Gastrocnemius medialis (tissue), 4 donors: ENCODE measurements at regions of chr11 and their contacts with region 1.

Region 1: GRCh38 chr11:63813035-63813562 is at the start of gene SPINDOC:
- DNase-seq: peak; percentile 56 to 66
- ATAC-seq: peak; percentile 86 to 92
- H3K4me3 ChIP-seq: peak within 1 kb of the TSS; percentile 82 to 99 (median 90)
- H3K27ac ChIP-seq: peak within 1 kb of the TSS; percentile 70 to 75 (median 73)
- H3K4me1 ChIP-seq: peaks cover 9 to 16% of the 10 kb centered on the region in 2 donors
- H3K27me3 ChIP-seq: no peaks in the 10 kb centered on the region
- CTCF ChIP-seq: no peak
- POLR2A ChIP-seq: peak; percentile 56 to 80
- total RNA-seq, gene SPINDOC: 2.7 to 6.3 (median 3.5) TPM

Region 2: DNA sequence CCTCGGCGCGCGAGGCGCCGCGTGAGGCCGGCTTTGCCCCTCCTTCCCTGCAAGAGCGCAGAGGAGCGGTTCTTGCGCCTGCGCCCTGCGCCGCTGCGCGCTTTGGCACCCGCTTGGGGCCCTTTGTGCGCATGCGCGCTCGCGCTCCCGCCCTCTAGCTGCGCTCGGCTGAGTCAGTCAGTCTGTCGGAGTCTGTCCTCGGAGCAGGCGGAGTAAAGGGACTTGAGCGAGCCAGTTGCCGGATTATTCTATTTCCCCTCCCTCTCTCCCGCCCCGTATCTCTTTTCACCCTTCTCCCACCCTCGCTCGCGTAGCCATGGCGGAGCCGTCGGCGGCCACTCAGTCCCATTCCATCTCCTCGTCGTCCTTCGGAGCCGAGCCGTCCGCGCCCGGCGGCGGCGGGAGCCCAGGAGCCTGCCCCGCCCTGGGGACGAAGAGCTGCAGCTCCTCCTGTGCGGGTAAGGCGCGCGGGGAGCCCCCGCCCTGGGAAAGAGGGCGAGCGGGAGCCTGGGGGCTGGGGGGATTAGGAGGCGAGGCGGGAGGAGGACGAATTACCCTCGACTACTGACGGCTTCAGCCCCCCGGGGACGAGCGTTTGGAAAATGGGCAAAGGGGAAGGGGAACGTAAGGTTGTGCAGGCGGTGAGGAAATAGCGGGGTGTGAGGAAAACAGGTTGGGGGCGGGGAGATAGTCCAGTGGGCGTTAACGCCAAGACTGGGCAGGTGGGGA is 131.6 kb before region 1 on chr11 and contains the start of gene RTN3:
- in situ Hi-C with region 1: no loop called
- intact Hi-C with region 1: loop called (anchors 5 kb)
- DNase-seq: peak; percentile 92 to 96
- ATAC-seq: peak; percentile 92 to 93
- H3K4me3 ChIP-seq: peak within 1 kb of the TSS; percentile 87 to 99 (median 96)
- H3K27ac ChIP-seq: peak within 1 kb of the TSS; percentile 97 to 99 (median 98)
- H3K4me1 ChIP-seq: peaks cover 29 to 45% of the 10 kb centered on the region in 2 donors
- H3K27me3 ChIP-seq: no peaks in the 10 kb centered on the region
- CTCF ChIP-seq: peak in 3 of 5 experiments; percentile 27 to 45 (median 28)
- POLR2A ChIP-seq: peak; percentile 98 to 99
- total RNA-seq, gene RTN3: 45.5 to 112 (median 86.0) TPM

Region 3: DNA sequence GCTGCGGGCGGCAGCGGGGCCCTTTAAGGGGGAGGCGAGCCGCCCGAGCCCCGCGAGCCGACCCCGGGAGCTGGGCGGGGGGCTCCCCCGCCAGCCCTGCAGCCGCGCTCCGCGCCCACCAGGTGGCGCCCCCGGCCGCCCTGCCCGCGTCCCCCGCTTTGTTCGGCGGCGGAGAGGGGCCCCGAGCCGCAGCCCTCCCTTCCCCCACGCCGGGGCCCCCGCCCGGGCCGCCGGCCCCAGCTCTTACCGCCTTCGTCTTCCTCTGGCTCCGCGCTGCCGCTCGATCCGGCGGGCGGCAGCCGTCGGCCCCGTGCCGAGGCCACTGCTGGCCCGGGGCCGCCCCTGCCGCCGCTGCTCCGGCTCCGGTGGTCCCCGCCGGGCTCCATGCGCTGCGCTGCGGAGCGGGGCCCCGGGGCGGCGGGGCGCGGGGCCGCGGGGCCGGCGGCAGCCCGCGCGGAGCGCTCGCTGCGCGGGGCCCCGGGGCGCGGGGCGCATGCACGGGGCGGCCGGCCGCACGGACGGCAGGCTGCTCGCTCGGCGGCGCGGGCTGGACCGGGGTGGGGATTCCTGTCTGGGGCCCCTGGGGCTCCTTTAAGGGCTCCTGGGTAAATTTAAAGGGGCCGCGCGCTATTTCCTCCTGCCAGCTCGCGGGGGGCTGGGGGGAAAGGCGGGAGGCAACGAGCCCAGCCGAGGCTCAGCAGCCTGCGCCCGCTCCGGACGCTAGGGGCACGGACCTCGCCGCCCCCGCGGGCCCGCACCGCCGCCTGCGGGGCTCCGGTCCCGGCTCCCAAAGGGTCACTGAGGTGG is 44.7 kb before region 1 on chr11 and contains the start of gene ZFTA:
- in situ Hi-C with region 1: no loop called
- intact Hi-C with region 1: loop called (anchors 1 kb)
- DNase-seq: peak in 1 of 2 donors; percentile 31
- ATAC-seq: peak; percentile 60 to 70
- H3K4me3 ChIP-seq: peak within 1 kb of the TSS; percentile 67 to 83 (median 72)
- H3K27ac ChIP-seq: peak within 1 kb of the TSS; percentile 69 to 81 (median 77)
- H3K4me1 ChIP-seq: peaks cover 10 to 13% of the 10 kb centered on the region in 2 donors
- H3K27me3 ChIP-seq: no peaks in the 10 kb centered on the region
- CTCF ChIP-seq: peak in 4 of 5 experiments; percentile 90 to 97 (median 95)
- POLR2A ChIP-seq: no peak
- total RNA-seq, gene ZFTA: 6.9 to 18.6 (median 11.8) TPM